ENCODE measurements at regions of chr6 and their contacts with region 1.

Region 1: DNA sequence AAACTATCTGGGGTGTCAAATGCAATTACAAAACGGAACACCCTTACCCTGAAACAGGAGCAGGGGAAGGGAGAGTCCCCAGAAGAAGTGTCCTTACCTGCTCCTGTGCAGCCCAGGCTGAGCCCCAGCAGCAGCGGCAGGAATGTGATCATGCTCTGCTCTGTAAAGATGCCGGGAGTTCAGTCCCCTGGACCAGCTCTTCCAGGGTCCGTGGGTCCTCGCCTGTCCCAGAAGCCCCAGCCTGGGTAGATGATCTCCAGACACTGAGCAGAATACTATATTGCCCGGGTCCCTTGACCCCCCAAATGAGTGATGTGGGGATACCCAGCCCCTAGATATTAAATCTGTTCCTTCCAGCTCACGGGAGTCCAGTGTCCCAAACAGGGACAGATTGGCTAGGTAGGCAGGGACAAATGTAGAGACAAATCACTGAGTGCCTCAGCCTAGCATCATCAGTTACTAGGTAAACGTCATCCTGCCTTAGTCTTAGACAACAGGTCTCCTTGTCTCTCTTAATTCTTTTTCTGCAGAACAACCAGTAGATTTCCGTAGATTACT is at the start of gene HLA-DMB:
- DNase-seq: peak; percentile 91
- ATAC-seq: peak; percentile 51
- H3K4me3 ChIP-seq: peak within 1 kb of the TSS; percentile 95 to 100 (median 96)
- H3K4me3 Mint-ChIP-seq: peak within 1 kb of the TSS; percentile 96
- H3K27ac ChIP-seq: peak within 1 kb of the TSS; percentile 97 to 98
- H3K27ac Mint-ChIP-seq: peak within 1 kb of the TSS; percentile 99
- H3K4me1 ChIP-seq: peaks cover 66 to 82% of the 10 kb centered on the region in 2 donors
- H3K4me1 Mint-ChIP-seq: peaks cover 80% of the 10 kb centered on the region
- H3K27me3 ChIP-seq: no peaks in the 10 kb centered on the region
- H3K27me3 Mint-ChIP-seq: no peaks in the 10 kb centered on the region
- CTCF ChIP-seq: no peak
- total RNA-seq, gene HLA-DMB: 587 and 593 TPM in 2 replicates

Region 2: DNA sequence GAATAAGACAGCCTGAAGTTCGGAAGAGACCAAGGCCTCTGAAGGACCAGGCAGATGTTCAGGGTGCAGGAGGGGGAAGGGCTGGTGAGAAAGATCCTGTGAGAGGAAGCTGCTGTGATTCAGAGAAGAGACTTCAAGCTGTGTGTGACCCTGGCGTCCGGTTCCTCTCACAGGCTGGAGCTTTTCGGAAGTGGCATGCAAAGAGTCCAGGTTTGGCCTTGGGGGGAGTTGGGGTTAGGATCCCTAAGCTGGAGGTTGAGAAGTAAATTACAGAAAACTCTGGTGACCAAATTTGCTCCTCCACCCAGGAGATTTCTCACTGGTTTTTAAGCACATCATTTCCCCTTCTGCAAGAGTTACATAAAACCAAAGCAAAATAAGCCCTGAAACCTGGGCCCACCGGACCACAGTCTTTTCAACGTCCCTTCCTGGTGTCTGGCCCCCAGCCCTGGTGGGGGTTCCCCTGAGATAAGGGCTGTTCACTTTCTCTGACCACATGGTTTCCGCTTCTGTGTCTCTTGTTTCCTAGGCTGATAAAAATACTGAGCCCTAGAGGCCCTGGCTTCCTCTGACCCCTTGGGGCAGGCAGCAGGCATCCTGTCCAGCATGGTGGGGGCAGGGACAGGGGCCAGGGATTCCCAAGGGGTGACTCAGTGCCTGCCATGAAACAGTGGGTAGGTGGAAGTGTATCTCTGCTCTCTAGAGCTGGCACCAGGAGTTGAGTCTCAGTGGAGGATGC is 1380.6 kb before region 1 on chr6:
- CTCF ChIA-PET with region 1: no interaction called
- POLR2A ChIA-PET with region 1: interaction called, 10 read pairs
- intact Hi-C with region 1: no loop called
- DNase-seq: peak; percentile 83
- ATAC-seq: peak; percentile 64
- H3K4me3 ChIP-seq: peak overlapping the region; percentile 4 to 61 (median 45)
- H3K4me3 Mint-ChIP-seq: peak overlapping the region; percentile 92
- H3K27ac ChIP-seq: peak overlapping the region; percentile 80 to 87
- H3K27ac Mint-ChIP-seq: peak overlapping the region; percentile 94
- H3K4me1 ChIP-seq: peaks cover 80 to 81% of the 10 kb centered on the region in 2 donors
- H3K4me1 Mint-ChIP-seq: peaks cover 82% of the 10 kb centered on the region
- H3K27me3 ChIP-seq: no peaks in the 10 kb centered on the region
- H3K27me3 Mint-ChIP-seq: no peaks in the 10 kb centered on the region
- CTCF ChIP-seq: no peak

Region 3: DNA sequence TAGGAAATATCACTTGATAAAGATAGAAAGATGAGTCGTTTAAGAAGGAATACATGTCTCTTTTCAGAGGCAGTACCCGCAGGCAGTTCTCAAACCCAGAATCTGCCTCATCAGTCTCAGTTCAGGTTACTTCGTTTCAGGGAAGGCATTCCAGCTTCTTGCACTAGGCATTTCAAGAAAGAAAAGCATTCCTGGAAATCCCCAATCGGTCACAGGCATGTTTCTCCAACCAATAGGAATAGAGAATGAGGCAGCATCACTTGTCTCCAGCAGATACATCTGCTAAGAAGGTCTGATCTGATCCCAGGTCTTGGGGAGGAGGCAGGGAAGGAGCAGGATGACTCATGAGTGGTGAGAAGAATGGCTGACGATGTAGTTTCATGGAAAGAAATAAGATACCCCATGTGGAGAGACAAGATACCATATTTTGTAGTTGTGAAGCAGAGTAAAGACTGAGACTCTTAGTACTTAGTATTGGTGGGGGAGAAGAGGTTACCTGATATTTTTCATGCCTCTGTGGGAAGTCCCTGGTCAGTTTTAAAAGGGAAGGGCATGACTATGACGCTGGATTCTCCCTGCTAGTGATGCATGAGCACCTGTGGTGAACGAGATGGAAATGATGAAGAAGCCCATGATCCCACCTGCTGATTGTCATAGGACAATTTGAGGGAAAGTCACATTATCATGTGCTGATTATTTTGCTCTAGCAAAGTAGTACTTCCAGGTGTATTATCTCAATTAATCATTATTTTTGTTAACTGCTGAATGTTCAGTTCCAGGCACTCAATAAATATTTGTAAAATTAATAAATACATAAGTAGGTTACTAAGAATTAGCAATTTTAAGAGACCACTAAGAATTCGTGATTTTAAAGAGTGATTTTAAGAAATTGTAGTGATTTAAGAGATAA is 330.7 kb before region 1 on chr6:
- CTCF ChIA-PET with region 1: no interaction called
- POLR2A ChIA-PET with region 1: interaction called, 5 read pairs
- intact Hi-C with region 1: loop called (anchors 10 kb)
- DNase-seq: peak; percentile 99
- ATAC-seq: peak; percentile 88
- H3K4me3 ChIP-seq: peak overlapping the region in 4 of 5 experiments; percentile 25 to 41 (median 30)
- H3K4me3 Mint-ChIP-seq: no peak overlapping the region
- H3K27ac ChIP-seq: peak overlapping the region; percentile 99 to 100
- H3K27ac Mint-ChIP-seq: no peak overlapping the region
- H3K4me1 ChIP-seq: peaks cover 47 to 53% of the 10 kb centered on the region in 2 donors
- H3K4me1 Mint-ChIP-seq: peaks cover 59% of the 10 kb centered on the region
- H3K27me3 ChIP-seq: no peaks in the 10 kb centered on the region
- H3K27me3 Mint-ChIP-seq: no peaks in the 10 kb centered on the region
- CTCF ChIP-seq: no peak

Region 4: GRCh38 chr6:32843979-32844838 is 96.5 kb before region 1 on chr6 and contains the start of gene PSMB8:
- CTCF ChIA-PET with region 1: interaction called, 12 read pairs
- POLR2A ChIA-PET with region 1: interaction called, 17 read pairs
- intact Hi-C with region 1: loop called (anchors 1 kb)
- DNase-seq: peak; percentile 99
- ATAC-seq: peak; percentile 78
- H3K4me3 ChIP-seq: peak within 1 kb of the TSS; percentile 88 to 100 (median 95)
- H3K4me3 Mint-ChIP-seq: peak within 1 kb of the TSS; percentile 95
- H3K27ac ChIP-seq: peak within 1 kb of the TSS; percentile 96 to 97
- H3K27ac Mint-ChIP-seq: peak within 1 kb of the TSS; percentile 99
- H3K4me1 ChIP-seq: peaks cover 72 to 81% of the 10 kb centered on the region in 2 donors
- H3K4me1 Mint-ChIP-seq: peaks cover 86% of the 10 kb centered on the region
- H3K27me3 ChIP-seq: no peaks in the 10 kb centered on the region
- H3K27me3 Mint-ChIP-seq: no peaks in the 10 kb centered on the region
- CTCF ChIP-seq: no peak
- total RNA-seq, gene PSMB8: 127 and 129 TPM in 2 replicates

Region 5: GRCh38 chr6:32894080-32895005 is 46.4 kb before region 1 on chr6:
- CTCF ChIA-PET with region 1: interaction called, 3 read pairs
- POLR2A ChIA-PET with region 1: interaction called, 40 read pairs
- intact Hi-C with region 1: loop called (anchors 1 kb)
- DNase-seq: peak; percentile 98
- ATAC-seq: peak; percentile 98
- H3K4me3 ChIP-seq: peak overlapping the region; percentile 84 to 96 (median 92)
- H3K4me3 Mint-ChIP-seq: peak overlapping the region; percentile 99
- H3K27ac ChIP-seq: peak overlapping the region; percentile 89 to 90
- H3K27ac Mint-ChIP-seq: peak overlapping the region; percentile 98
- H3K4me1 ChIP-seq: peaks cover 40 to 42% of the 10 kb centered on the region in 2 donors
- H3K4me1 Mint-ChIP-seq: peaks cover 60% of the 10 kb centered on the region
- H3K27me3 ChIP-seq: no peaks in the 10 kb centered on the region
- H3K27me3 Mint-ChIP-seq: no peaks in the 10 kb centered on the region
- CTCF ChIP-seq: no peak

Region 6: GRCh38 chr6:32971581-32972352 is 31.0 kb after region 1 on chr6:
- CTCF ChIA-PET with region 1: interaction called, 142 read pairs
- POLR2A ChIA-PET with region 1: interaction called, 326 read pairs
- intact Hi-C with region 1: loop called (anchors 1 kb)
- DNase-seq: peak; percentile 100
- ATAC-seq: peak; percentile 50
- H3K4me3 ChIP-seq: peak overlapping the region; percentile 88 to 100 (median 96)
- H3K4me3 Mint-ChIP-seq: peak overlapping the region; percentile 96
- H3K27ac ChIP-seq: peak overlapping the region; percentile 96
- H3K27ac Mint-ChIP-seq: peak overlapping the region; percentile 99
- H3K4me1 ChIP-seq: peaks cover 32 to 43% of the 10 kb centered on the region in 2 donors
- H3K4me1 Mint-ChIP-seq: peaks cover 40% of the 10 kb centered on the region
- H3K27me3 ChIP-seq: no peaks in the 10 kb centered on the region
- H3K27me3 Mint-ChIP-seq: no peaks in the 10 kb centered on the region
- CTCF ChIP-seq: no peak

Region 7: DNA sequence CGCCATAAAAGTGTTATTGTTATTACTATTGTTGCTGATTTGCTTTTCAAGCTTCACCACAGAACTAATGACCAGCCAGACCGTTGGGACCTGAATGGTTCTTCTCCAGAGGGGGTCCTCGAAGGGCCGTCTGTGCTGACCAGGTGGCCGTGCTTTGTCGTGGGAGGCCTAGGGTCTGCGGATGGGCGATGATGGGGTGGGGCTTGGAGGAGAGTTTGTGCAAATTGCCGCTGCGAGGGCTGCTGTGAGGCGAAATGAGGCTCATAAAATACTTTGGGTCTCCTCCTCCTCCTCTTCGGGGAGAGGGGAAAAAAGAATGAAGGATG is 382.9 kb after region 1 on chr6:
- CTCF ChIA-PET with region 1: no interaction called
- POLR2A ChIA-PET with region 1: no interaction called
- intact Hi-C with region 1: no loop called
- DNase-seq: no peak
- ATAC-seq: no peak
- H3K4me3 ChIP-seq: peak overlapping the region; percentile 72 to 93 (median 85)
- H3K4me3 Mint-ChIP-seq: peak overlapping the region; percentile 91
- H3K27ac ChIP-seq: peak overlapping the region; percentile 85 to 95
- H3K27ac Mint-ChIP-seq: peak overlapping the region; percentile 93
- H3K4me1 ChIP-seq: peaks cover 43 to 63% of the 10 kb centered on the region in 2 donors
- H3K4me1 Mint-ChIP-seq: peaks cover 59% of the 10 kb centered on the region
- H3K27me3 ChIP-seq: no peaks in the 10 kb centered on the region
- H3K27me3 Mint-ChIP-seq: no peaks in the 10 kb centered on the region
- CTCF ChIP-seq: no peak

Region 8: GRCh38 chr6:34115403-34115795 is 1174.7 kb after region 1 on chr6:
- CTCF ChIA-PET with region 1: no interaction called
- POLR2A ChIA-PET with region 1: no interaction called
- intact Hi-C with region 1: no loop called
- DNase-seq: peak; percentile 31
- ATAC-seq: no peak
- H3K4me3 ChIP-seq: no peak overlapping the region
- H3K4me3 Mint-ChIP-seq: no peak overlapping the region
- H3K27ac ChIP-seq: no peak overlapping the region
- H3K27ac Mint-ChIP-seq: no peak overlapping the region
- H3K4me1 ChIP-seq: no peaks in the 10 kb centered on the region
- H3K4me1 Mint-ChIP-seq: no peaks in the 10 kb centered on the region
- H3K27me3 ChIP-seq: peaks cover 0 to 22% (median 0%) of the 10 kb centered on the region in 4 experiments
- H3K27me3 Mint-ChIP-seq: peaks cover 39% of the 10 kb centered on the region
- CTCF ChIP-seq: no peak